ENCODE measurements at regions of chr9 and their contacts with region 1.

Region 1: DNA sequence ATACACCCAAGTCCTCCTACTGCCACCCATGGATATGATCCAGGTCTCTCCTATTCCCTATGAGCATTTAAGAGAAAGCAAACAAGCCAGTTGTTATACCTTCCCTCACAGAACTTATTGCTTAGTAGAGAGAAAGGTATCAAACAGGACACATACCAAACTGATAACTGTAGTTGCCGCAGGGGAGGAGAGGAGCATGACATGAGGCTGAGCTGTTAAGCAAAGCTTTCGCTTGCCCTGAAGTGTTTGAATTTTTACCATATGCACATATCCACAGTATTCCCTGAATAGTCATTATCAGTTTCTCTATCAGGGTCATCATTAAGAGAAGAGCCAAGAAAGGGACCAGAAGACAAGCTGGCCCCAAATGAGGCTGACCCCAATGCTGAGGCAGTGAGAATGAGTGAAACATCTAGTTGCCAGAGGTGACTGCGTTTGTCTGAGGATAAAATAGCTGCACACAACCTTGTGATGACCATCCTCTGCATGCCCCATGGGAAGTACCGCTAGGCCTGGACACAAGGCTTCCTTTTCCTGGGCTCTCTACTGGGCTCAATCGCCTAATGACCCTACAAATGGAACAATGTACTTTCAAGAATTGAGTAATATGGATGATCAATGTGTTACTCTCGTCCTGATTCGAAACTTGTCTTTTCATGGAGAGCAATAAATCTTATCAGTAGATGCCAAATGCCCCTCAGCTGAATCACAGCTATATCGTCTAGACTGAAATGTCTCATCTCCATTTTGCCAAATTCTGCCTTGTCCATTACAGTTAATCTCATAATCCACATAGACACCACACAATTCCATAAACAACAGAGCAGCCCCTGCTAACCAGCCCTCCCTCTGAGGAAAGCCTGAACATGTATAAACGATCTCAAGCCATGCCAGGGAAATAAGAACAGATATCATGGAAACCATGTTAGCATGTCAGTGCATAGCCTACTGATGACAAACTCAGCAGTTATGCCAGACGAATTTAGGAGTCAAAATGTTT is 4.3 kb upstream of the IFNK start:
- DNase-seq: peak; percentile 39
- H3K4me3 Mint-ChIP-seq: peak overlapping the region; percentile 17
- H3K27ac Mint-ChIP-seq: peak overlapping the region; percentile 41
- H3K4me1 Mint-ChIP-seq: peaks cover 40% of the 10 kb centered on the region
- H3K27me3 Mint-ChIP-seq: no peaks in the 10 kb centered on the region
- CTCF ChIP-seq: no peak

Region 2: DNA sequence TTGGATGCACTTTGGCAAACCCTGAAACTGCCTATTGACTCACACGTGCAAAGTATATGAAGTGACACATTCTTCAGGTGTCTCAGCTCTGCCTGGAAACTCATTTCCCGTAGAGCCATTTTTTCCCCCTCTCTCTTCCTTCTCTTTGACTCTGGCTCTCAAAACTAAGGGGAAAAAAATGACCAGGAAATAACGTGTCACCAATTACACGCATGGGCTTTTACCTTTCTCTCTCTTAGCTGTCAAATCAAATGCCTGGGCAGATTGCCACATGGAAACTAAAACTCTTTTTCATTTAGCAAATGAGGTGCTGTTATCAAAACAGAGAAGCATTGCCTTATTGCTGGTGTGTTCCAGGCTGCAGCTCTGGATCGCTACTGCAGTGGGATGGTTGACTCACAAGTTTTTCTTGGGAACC is 14.0 kb before region 1 on chr9:
- CTCF ChIA-PET with region 1: interaction called, 4 read pairs
- POLR2A ChIA-PET with region 1: interaction called, 10 read pairs
- intact Hi-C with region 1: no loop called
- DNase-seq: peak; percentile 51
- H3K4me3 Mint-ChIP-seq: peak overlapping the region; percentile 16
- H3K27ac Mint-ChIP-seq: peak overlapping the region; percentile 5
- H3K4me1 Mint-ChIP-seq: peaks cover 27% of the 10 kb centered on the region
- H3K27me3 Mint-ChIP-seq: no peaks in the 10 kb centered on the region
- CTCF ChIP-seq: no peak

Region 3: DNA sequence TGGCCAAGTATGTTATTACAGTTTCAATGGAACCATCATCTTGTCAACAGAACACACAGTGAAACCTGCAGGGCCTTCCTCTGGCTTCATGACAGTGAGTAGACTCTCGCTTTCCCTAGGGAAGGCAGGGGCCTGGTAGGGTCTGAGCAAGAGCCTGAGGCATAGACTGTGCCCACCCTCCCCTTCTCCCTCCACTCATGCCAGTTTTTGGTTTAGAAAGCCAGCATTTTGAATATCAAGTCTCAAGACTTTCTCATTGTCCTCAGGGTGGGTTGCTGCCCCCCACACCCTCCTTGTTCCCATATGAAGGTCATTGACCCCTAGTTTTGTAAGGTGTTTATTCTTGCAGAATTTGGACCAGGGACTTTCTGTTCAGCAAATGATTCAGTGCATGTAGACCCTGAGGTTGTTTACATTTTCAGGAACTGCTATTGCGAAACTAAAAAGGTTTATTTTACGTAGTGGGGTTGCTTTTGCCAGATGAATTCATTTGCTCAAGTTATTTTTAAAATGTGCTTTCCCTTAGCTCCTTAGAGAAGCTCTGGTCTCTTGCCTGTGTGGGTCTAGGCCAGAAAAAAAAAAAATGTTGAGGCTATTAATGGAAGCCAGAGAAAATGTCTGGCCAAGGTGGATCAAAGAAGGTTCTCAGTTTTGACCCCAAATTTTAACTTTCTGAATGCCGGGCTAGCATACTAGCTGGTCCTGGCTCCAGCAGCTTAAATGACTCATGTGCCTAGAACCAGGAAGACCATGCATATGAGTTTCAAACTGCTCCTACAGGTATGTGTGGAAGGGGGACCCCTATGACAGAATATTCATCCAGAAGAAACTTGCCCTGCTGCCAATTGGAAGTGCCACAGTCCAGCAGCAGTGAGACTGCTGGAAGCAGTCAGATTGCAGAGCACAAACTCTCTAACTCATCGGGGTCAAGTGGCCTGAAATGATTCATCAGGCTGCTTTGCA is 20.0 kb after region 1 on chr9:
- CTCF ChIA-PET with region 1: interaction called, 3 read pairs
- POLR2A ChIA-PET with region 1: interaction called, 10 read pairs
- intact Hi-C with region 1: no loop called
- DNase-seq: peak; percentile 90
- H3K4me3 Mint-ChIP-seq: peak overlapping the region; percentile 63
- H3K27ac Mint-ChIP-seq: peak overlapping the region; percentile 98
- H3K4me1 Mint-ChIP-seq: peaks cover 32% of the 10 kb centered on the region
- H3K27me3 Mint-ChIP-seq: no peaks in the 10 kb centered on the region
- CTCF ChIP-seq: no peak